Breast epithelium (tissue), 4 donors: ENCODE measurements at regions of chr3 and their contacts with region 1.

Region 1: DNA sequence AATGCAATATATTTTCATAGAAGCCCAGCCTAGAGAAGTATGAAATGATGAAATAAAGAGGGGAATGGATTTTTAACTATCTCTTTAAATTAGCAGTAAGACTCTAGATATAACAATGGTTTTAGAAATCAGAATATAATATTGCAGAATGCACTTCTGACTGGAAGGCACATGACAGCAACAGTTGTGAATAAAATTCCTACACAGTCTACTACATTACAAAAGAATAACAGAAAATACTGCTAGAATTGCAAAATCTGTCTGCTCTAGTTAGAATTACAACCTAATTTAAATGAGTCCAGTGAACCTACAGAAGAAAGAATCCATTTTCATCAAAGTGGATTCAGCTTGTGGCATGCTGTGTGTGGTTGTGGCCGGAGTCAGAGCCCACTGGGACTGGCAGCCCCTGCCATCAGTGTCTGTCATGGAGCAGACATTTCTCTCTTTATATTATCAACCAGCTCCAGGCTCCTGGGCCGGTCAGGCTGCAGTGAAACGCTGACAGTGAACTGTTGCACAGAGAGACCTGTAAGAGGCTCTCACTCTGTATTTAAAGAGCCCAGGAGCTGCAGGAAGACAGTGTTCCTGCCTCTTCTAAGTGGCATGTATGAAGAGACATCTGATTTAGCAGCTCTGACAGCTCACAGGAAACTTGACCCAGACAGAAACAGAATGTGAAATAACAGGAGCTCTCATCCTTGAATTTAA is 1523.8 kb upstream of the CADM2 start:
- DNase-seq: no peak
- H3K4me3 ChIP-seq: no peak overlapping the region
- H3K27ac ChIP-seq: no peak overlapping the region
- H3K4me1 ChIP-seq: no peaks in the 10 kb centered on the region
- H3K27me3 ChIP-seq: no peaks in the 10 kb centered on the region
- CTCF ChIP-seq: no peak
- POLR2A ChIP-seq: no peak

Region 2: DNA sequence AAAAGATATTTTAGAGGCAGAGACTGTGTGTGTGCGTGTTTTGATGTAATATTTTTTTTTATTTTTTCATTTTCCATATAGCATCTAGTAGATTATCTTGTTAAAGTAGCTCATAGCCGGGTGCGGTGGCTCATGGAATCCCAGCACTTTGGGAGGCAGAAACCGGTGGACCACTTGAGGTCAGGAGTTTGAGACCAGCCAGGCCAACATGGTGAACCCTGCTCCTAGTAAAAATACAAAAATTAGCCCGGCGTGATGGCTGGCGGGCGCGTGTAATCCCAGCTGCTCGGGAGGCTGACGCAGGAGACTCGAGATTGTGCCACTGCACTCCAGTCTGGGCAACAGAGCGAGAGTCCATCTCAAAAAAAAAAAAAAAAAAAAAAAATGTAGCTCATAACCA is 42.5 kb after region 1 on chr3:
- intact Hi-C with region 1: no loop called
- DNase-seq: no peak
- H3K4me3 ChIP-seq: no peak overlapping the region
- H3K27ac ChIP-seq: no peak overlapping the region
- H3K4me1 ChIP-seq: no peaks in the 10 kb centered on the region
- H3K27me3 ChIP-seq: no peaks in the 10 kb centered on the region
- CTCF ChIP-seq: no peak
- POLR2A ChIP-seq: no peak

Region 3: DNA sequence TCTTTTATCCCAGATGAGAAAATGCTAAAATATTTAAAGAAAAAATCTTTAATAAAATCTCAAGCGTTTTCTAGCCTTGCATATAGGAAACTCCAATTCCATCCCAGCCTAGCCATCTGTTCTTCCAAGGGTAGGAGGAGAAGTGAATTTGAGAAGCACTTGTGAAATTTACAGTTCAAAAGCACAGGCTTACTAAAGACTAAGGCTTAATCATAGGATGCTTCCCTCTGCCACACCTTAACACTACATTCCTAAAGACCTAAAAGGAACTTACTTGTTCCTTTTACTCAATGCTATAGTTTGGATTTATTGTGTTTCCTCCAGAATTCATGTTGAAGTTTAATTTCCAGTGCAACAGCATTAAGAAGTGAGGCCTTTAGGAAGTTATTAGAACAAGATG is 759.0 kb after region 1 on chr3:
- intact Hi-C with region 1: loop called (anchors 5 kb)
- DNase-seq: no peak
- H3K4me3 ChIP-seq: no peak overlapping the region
- H3K27ac ChIP-seq: no peak overlapping the region
- H3K4me1 ChIP-seq: no peaks in the 10 kb centered on the region
- H3K27me3 ChIP-seq: no peaks in the 10 kb centered on the region
- CTCF ChIP-seq: no peak
- POLR2A ChIP-seq: no peak